HEK293 (cell line): ENCODE measurements at regions of chr5 and their contacts with region 1.

Region 1: DNA sequence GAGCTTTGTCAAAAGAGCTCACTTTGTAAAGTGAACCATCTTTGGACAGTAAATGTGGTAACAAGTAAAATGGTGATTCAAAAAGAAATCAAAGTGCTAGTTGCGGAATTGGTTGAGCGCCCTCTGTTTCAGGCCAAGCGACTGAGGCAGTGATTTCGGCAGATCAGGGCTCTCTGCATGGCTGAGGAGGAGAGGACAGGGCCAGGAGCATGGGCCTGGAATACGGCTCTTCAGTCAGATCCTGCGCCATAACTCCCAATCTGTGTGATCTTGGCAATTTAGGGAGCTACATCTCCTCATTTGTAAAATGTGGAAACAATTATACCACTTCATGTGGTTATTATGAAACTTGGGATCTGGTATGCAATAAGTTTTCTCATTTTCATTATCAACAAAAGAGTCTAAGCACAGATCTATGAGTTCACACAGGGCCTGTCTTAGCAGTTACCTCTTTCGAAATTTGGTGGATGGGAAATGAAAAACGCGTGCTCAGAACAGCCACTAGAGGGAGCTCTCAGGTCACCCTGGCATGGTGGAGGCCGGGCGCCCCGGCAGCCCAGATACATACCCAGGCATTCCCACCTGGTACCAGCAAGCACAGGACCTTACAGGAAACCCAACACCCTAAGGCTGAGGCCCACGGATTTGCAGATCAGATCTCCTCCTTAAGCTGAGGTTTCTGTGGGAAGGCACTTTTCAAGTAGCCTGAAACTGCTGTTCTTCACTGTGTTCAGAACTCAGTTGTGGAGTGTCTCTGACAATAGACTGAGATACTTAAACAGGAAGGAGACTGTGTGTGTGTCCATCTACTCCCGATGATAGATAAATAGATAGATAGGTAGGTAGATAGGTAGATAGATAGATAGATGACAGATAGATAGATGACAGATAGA is 303.7 kb downstream of the RAB3C start:
- H3K4me3 ChIP-seq: no peak overlapping the region
- H3K27ac ChIP-seq: no peak overlapping the region
- H3K4me1 ChIP-seq: no peaks in the 10 kb centered on the region; the same call in 1 of the 2 replicates
- CTCF ChIP-seq: peak; percentile 59; the same call in 1 of the 2 replicates

Region 2: DNA sequence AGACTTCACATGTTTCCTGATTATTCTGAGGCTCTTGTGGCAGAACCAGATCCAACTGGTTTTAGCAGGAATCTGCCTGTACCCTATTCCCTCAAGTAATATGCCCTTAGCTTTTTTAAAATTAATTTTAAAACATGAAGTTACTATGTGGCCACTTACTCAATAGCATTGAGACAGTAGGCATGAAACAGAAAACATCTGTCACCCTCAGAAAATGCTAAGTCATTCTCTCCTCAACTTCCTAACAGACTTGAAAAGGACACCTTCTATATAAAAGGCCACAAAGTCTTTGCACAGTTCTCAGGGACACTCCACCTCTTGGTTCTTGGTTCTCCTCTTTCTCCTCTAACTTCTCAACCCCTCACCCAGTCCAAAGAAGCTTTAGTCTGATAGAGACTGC is 25.9 kb before region 1 on chr5:
- CTCF ChIA-PET with region 1: interaction called, 13 read pairs
- POLR2A ChIA-PET with region 1: no interaction called
- H3K4me3 ChIP-seq: no peak overlapping the region
- H3K27ac ChIP-seq: no peak overlapping the region
- H3K4me1 ChIP-seq: no peaks in the 10 kb centered on the region
- CTCF ChIP-seq: no peak

Region 3: DNA sequence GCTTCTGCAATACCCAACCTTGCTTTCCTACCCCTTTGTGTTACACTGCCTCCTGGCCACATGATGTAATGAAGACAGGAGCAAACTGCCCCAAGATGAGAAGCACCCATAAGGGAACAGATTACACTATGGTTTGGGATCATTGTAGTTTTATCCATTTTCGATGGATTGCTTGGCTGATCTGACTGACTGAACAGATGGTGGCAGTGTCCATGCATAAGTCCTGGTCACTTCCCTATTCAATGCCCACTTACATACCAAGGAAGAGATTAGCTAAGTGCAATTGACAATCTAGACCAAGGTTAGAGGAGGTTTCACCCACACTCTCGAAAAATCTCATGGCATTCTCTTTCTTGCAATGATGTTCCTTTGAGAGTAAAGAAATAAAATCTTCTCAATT is 16.2 kb after region 1 on chr5:
- CTCF ChIA-PET with region 1: interaction called, 14 read pairs
- POLR2A ChIA-PET with region 1: no interaction called
- H3K4me3 ChIP-seq: no peak overlapping the region
- H3K27ac ChIP-seq: no peak overlapping the region
- H3K4me1 ChIP-seq: no peaks in the 10 kb centered on the region
- CTCF ChIP-seq: no peak

Region 4: GRCh38 chr5:58999804-59000595 is 113.4 kb after region 1 on chr5:
- CTCF ChIA-PET with region 1: interaction called, 37 read pairs
- POLR2A ChIA-PET with region 1: no interaction called
- H3K4me3 ChIP-seq: no peak overlapping the region
- H3K27ac ChIP-seq: no peak overlapping the region
- H3K4me1 ChIP-seq: no peaks in the 10 kb centered on the region
- CTCF ChIP-seq: no peak

Region 5: DNA sequence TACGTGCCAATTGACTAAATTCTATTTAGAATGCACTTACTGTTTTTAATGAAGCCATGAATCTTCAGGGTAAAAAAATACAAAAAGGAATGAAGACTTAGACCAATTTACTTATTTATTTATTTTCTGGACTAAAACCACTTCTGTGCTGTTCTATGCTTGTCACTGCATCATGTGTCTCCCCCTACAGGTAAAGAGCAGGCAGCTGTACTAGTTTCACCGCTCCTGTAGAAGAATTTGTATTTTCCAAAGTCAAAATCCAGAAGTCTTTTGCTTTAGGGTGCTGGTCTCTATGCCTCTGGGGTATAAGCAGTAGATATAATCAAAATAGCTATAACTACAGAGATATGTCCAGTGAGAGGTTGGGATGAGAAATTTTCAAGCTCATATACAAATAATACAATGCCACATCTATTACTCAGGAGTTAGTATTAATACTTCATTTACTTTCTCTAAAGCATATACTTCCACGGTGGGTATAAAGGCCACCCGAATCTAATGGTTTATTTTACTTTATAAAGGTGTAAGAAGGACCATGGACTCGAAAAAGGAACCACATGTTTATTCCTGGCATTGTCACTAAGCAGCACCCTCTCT is 287.8 kb after region 1 on chr5:
- CTCF ChIA-PET with region 1: interaction called, 43 read pairs
- POLR2A ChIA-PET with region 1: no interaction called
- H3K4me3 ChIP-seq: no peak overlapping the region
- H3K27ac ChIP-seq: no peak overlapping the region
- H3K4me1 ChIP-seq: no peaks in the 10 kb centered on the region
- CTCF ChIP-seq: peak; percentile 54